ENCODE measurements at regions of chr9 and their contacts with region 1.

Region 1: GRCh38 chr9:11319538-11319937 is 706.7 kb upstream of the PTPRD start:
- DNase-seq: no peak
- ATAC-seq: no peak
- H3K4me3 ChIP-seq: no peak overlapping the region
- H3K27ac ChIP-seq: no peak overlapping the region
- H3K4me1 ChIP-seq: no peaks in the 10 kb centered on the region
- H3K27me3 ChIP-seq: no peaks in the 10 kb centered on the region
- CTCF ChIP-seq: peak in 9 of 12 donors; percentile 17 to 49 (median 33)
- POLR2A ChIP-seq: no peak

Region 2: GRCh38 chr9:10045598-10045997 is 1273.9 kb before region 1 on chr9:
- intact Hi-C with region 1: loop called in 3 of 10 experiments (anchors 5 to 10 kb)
- DNase-seq: no peak
- ATAC-seq: no peak
- H3K4me3 ChIP-seq: no peak overlapping the region
- H3K27ac ChIP-seq: no peak overlapping the region
- H3K4me1 ChIP-seq: no peaks in the 10 kb centered on the region
- H3K27me3 ChIP-seq: no peaks in the 10 kb centered on the region
- CTCF ChIP-seq: peak in 11 of 12 donors; percentile 15 to 55 (median 39)
- POLR2A ChIP-seq: no peak

Region 3: DNA sequence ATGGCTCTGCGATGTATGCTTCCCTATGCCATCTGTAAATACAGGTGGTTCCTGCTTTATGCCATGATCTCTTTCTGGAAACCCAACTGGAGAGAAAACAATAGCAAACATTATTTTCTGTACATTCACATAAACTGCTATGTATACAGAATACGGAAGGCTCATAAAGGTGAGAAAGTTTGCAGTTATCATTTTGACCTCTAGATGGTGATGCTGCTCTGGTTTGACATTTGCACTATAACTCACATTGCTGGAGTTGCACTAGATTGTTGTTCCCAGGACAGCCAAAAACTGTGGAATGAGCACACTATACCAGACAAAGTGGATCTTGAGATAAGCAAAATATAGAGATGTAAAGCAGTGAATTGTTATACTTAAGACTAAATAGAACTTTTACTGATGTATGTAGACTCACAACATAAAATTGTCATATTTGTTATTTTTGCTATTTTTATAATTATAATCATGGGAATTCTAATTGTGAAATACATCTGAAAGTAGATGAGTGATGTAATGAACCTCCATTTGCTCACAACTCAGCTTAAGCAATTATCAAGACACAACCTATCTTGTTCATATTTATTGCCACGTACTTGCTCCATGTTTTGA is 953.3 kb before region 1 on chr9:
- intact Hi-C with region 1: loop called in 1 of 10 experiments (anchors 10 kb)
- DNase-seq: no peak
- ATAC-seq: no peak
- H3K4me3 ChIP-seq: no peak overlapping the region
- H3K27ac ChIP-seq: no peak overlapping the region
- H3K4me1 ChIP-seq: no peaks in the 10 kb centered on the region
- H3K27me3 ChIP-seq: peaks cover 0 to 4% (median 0%) of the 10 kb centered on the region in 9 donors
- CTCF ChIP-seq: peak in 11 of 12 donors; percentile 18 to 56 (median 42)
- POLR2A ChIP-seq: no peak

Region 4: DNA sequence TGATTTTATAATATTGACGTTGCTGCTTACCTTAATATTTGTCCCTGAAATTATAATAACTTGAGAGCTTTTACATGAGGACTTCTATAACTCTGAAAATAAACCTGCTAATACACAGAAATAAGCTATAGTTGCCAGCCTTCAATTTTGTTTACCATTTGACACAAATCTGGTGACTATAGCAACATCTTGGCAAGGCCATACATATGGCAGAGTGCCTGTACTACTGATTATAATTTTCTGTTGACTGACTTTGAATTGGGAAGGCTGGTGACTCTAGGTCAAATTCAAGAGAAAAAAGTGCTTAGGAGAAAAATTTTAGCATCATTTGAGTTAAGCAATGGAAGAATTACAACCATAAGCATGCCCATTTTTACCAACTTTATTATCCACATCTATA is 125.3 kb before region 1 on chr9:
- intact Hi-C with region 1: no loop called
- DNase-seq: peak in 1 of 5 donors; percentile 23
- ATAC-seq: peak in 2 of 4 donors; percentile 45 to 47
- H3K4me3 ChIP-seq: no peak overlapping the region
- H3K27ac ChIP-seq: no peak overlapping the region
- H3K4me1 ChIP-seq: no peaks in the 10 kb centered on the region
- H3K27me3 ChIP-seq: no peaks in the 10 kb centered on the region
- CTCF ChIP-seq: no peak
- POLR2A ChIP-seq: no peak

Region 5: GRCh38 chr9:11431490-11431889 is 112.0 kb after region 1 on chr9:
- intact Hi-C with region 1: no loop called
- DNase-seq: no peak
- ATAC-seq: no peak
- H3K4me3 ChIP-seq: no peak overlapping the region
- H3K27ac ChIP-seq: no peak overlapping the region
- H3K4me1 ChIP-seq: no peaks in the 10 kb centered on the region
- H3K27me3 ChIP-seq: no peaks in the 10 kb centered on the region
- CTCF ChIP-seq: no peak
- POLR2A ChIP-seq: no peak